PC-9 (cell line): ENCODE measurements at regions of chr2 and their contacts with region 1.

Region 1: DNA sequence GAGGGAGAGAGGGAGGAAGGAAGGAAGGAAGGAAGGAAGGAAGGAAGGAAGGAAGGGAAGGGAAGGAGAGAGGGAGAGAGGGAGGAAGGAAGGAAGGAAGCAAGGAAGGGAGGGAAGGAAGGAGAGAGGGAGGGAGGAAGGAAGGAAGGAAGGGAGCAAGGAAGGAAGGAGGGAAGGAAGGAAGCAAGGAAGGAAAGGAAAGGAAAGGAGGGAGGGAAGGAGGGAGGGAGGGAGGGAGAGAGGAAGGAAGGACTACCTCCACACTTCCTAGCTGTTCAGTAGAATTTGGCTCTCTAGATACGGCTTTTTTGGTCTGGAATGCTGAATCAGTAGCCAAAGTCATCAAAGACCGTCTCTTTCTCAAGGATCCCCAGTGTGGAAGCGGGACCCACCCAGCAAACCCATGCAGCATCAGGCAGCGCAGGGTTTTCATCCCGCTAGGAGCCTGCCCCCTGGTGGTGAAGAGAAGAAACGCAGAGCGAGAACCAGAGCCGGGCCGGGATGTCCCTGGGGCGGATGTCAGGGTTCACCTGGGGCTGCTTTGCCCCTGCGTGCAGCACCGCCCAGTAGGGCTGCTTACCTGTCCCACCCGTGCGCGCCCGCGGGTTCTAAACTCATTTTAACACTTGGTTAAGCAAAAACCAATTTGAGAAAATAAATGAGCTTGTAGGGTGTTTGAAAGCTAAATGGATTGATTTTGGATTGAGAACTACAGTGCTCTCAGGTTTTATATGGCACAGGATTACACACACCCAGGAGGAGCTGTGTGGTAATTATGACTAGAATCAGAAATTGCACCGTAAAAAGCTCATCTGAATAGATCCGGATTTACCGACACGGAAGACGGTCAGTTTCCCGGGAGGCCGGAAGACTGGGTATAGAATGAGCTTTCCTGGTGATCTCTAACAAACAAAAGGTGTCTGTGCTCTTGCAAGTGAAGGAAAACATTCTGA is 48.1 kb upstream of the ARL4C start:
- DNase-seq: peak; percentile 66 to 83
- H3K4me3 ChIP-seq: no peak overlapping the region
- H3K27ac ChIP-seq: no peak overlapping the region
- H3K4me1 ChIP-seq: peaks cover 4% of the 10 kb centered on the region; the same call in 1 of the 2 replicates
- H3K27me3 ChIP-seq: no peaks in the 10 kb centered on the region
- CTCF ChIP-seq: peak; percentile 98

Region 2: DNA sequence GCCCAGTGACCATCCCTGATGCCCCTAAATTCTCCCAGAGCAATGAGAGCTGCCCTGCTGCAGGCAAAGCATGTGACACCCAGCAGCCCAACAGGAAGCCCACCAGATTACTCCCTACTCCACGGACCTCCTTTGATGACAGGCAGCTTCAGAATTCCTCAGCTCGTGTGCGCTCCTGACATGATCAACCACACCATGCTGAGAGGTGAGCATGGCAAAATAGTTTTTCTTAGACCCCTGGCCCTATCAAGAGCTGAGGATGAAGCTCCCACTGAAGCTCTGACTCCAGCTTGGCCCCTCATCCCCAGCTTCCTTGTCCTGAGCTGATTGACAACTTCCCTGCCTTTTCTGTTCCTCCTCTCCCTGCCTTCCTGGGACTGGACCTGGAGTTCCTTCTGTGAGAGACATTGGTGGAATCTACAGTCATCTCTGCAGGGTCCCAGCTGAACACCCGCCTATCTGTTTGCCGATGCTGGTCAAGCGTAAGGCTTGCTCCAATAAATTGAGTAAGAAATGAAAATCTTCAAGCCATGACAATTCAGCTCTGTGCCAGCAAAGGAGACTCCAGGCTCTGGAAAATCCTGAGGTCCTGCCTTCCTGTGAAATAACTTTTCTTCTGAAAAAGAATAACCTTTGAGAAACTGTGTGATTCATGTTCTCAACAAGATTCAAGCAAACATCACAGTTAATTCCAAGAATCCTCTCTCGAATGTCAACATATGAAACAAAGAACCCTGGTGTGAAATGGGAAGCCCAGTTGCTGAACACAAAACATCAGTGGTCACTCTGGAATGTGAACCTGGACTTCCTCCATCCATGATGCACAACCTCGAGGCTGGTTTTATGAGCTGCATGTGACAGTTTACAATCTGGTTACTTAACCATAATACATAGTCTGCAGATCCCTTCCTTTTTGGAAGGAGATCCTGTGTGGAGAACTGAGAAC is 293.3 kb before region 1 on chr2:
- CTCF ChIA-PET with region 1: no interaction called
- POLR2A ChIA-PET with region 1: no interaction called
- intact Hi-C with region 1: loop called (anchors 2 kb)
- DNase-seq: peak; percentile 81 to 99
- H3K4me3 ChIP-seq: no peak overlapping the region
- H3K27ac ChIP-seq: peak overlapping the region; percentile 91
- H3K4me1 ChIP-seq: peaks cover 80% of the 10 kb centered on the region
- H3K27me3 ChIP-seq: no peaks in the 10 kb centered on the region
- CTCF ChIP-seq: no peak

Region 3: DNA sequence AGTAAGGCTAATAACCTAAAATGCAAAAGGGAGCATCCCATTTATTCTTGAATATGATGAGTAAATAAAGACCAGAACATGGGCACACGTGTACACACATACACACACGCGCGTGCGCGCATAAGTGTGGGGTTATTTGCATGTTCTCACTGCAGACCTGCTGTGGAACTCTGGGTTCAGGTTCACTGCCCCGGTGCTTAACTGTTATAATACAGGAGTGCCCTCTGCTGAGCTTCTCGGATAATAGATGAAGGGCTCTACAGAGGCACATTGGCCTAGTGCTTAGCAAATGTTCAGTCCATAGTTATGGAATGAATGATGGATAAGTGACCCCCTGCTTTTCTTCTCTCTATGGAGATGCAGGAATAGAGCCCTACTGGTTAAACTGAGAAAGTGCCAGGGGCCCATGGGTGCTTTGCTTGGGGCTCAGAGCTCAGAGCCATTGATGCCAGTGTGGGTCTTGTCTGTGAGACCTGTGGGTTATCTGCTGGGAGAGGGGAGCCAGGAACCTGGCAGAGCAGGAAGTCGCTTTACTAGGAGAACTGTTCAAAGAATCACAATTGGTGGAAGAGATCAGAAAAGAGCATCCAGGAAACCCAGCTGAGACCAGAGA is 44.4 kb before region 1 on chr2:
- CTCF ChIA-PET with region 1: interaction called, 15 read pairs
- POLR2A ChIA-PET with region 1: no interaction called
- intact Hi-C with region 1: no loop called
- DNase-seq: peak; percentile 46 to 57
- H3K4me3 ChIP-seq: no peak overlapping the region
- H3K27ac ChIP-seq: no peak overlapping the region
- H3K4me1 ChIP-seq: peaks cover 17% of the 10 kb centered on the region
- H3K27me3 ChIP-seq: no peaks in the 10 kb centered on the region
- CTCF ChIP-seq: peak; percentile 70

Region 4: DNA sequence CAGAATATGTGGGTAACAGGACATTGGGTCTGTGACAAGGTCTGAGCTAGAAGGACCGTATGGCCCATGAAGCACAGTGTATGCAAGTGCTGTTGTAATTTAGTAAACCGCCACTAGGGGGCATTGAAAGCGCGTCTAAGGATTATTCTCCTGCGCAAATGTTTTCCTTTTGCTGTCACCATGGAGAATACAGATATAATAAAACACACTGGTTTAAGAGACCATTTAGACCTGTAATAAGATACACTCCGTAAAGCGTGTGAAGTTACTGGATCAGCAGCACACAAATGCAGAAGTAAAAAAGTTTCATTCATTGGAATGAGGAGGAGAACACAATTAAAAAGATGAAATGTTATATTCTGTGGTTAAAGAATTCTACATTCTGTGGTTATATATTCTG is 1221.3 kb after region 1 on chr2:
- CTCF ChIA-PET with region 1: interaction called, 13 read pairs
- POLR2A ChIA-PET with region 1: no interaction called
- intact Hi-C with region 1: no loop called
- DNase-seq: peak; percentile 81 to 82
- H3K4me3 ChIP-seq: no peak overlapping the region
- H3K27ac ChIP-seq: no peak overlapping the region
- H3K4me1 ChIP-seq: no peaks in the 10 kb centered on the region
- H3K27me3 ChIP-seq: no peaks in the 10 kb centered on the region
- CTCF ChIP-seq: peak; percentile 99